Natural killer cell (primary cell): ENCODE measurements at regions of chr7 and their contacts with region 1.

Region 1: DNA sequence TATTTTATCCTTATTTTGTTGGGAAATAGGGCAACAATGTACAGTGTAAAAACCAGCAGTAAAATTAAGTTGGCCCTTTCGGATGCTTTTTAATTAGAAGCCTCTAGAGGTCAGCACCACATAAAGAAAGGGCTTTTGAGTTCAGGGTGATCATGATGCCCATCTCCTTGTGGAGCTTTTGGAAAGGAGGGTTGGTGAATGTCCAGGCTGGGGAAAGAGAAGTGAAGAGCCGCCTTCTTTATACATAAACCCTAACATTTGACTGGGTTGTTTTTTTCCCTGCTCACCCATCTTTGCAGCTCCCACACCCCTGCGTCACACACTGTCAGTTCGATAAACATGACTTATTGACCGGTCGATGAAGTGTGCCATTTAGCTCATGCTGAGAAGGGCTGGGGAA is 29.8 kb downstream of the MTURN start:
- DNase-seq: peak in 1 of 2 donors; percentile 51
- ATAC-seq: peak in 2 of 3 donors; percentile 14 to 25
- H3K4me3 ChIP-seq: no peak overlapping the region
- H3K4me3 Mint-ChIP-seq: peak overlapping the region; percentile 74
- H3K27ac ChIP-seq: no peak overlapping the region
- H3K27ac Mint-ChIP-seq: peak overlapping the region; percentile 87 to 89
- H3K4me1 ChIP-seq: peaks cover 32% of the 10 kb centered on the region
- H3K4me1 Mint-ChIP-seq: peaks cover 40 to 48% of the 10 kb centered on the region in 2 donors
- H3K27me3 ChIP-seq: no peaks in the 10 kb centered on the region
- H3K27me3 Mint-ChIP-seq: no peaks in the 10 kb centered on the region
- CTCF ChIP-seq: peak; percentile 67

Region 2: GRCh38 chr7:30026229-30027064 is 138.1 kb before region 1 on chr7 and contains the start of gene FKBP14:
- intact Hi-C with region 1: loop called (anchors 1 kb)
- DNase-seq: peak; percentile 88 to 96
- ATAC-seq: peak; percentile 83 to 93 (median 87)
- H3K4me3 ChIP-seq: peak within 1 kb of the TSS; percentile 88
- H3K4me3 Mint-ChIP-seq: no peak within 1 kb of the TSS
- H3K27ac ChIP-seq: peak within 1 kb of the TSS; percentile 76
- H3K27ac Mint-ChIP-seq: peak within 1 kb of the TSS; percentile 85 to 92
- H3K4me1 ChIP-seq: peaks cover 15% of the 10 kb centered on the region
- H3K4me1 Mint-ChIP-seq: peaks cover 35 to 45% of the 10 kb centered on the region in 2 donors
- H3K27me3 ChIP-seq: no peaks in the 10 kb centered on the region
- H3K27me3 Mint-ChIP-seq: no peaks in the 10 kb centered on the region
- CTCF ChIP-seq: no peak
- total RNA-seq, gene FKBP14: 11.1 to 13.4 (median 11.9) TPM

Region 3: GRCh38 chr7:30116771-30117170 is 47.8 kb before region 1 on chr7:
- intact Hi-C with region 1: no loop called
- DNase-seq: no peak
- ATAC-seq: no peak
- H3K4me3 ChIP-seq: no peak overlapping the region
- H3K4me3 Mint-ChIP-seq: no peak overlapping the region
- H3K27ac ChIP-seq: no peak overlapping the region
- H3K27ac Mint-ChIP-seq: no peak overlapping the region
- H3K4me1 ChIP-seq: no peaks in the 10 kb centered on the region
- H3K4me1 Mint-ChIP-seq: peaks cover 6% of the 10 kb centered on the region in 2 donors
- H3K27me3 ChIP-seq: no peaks in the 10 kb centered on the region
- H3K27me3 Mint-ChIP-seq: no peaks in the 10 kb centered on the region
- CTCF ChIP-seq: no peak

Region 4: GRCh38 chr7:30284298-30285066 is 119.9 kb after region 1 on chr7 and contains the start of gene ZNRF2:
- intact Hi-C with region 1: loop called (anchors 1 kb)
- DNase-seq: peak; percentile 96 to 100
- ATAC-seq: peak; percentile 81 to 94 (median 83)
- H3K4me3 ChIP-seq: peak within 1 kb of the TSS; percentile 65
- H3K4me3 Mint-ChIP-seq: peak within 1 kb of the TSS; percentile 84
- H3K27ac ChIP-seq: peak within 1 kb of the TSS; percentile 90
- H3K27ac Mint-ChIP-seq: peak within 1 kb of the TSS; percentile 89 to 98
- H3K4me1 ChIP-seq: peaks cover 8% of the 10 kb centered on the region
- H3K4me1 Mint-ChIP-seq: peaks cover 52 to 53% of the 10 kb centered on the region in 2 donors
- H3K27me3 ChIP-seq: no peaks in the 10 kb centered on the region
- H3K27me3 Mint-ChIP-seq: no peaks in the 10 kb centered on the region
- CTCF ChIP-seq: peak; percentile 25
- total RNA-seq, gene ZNRF2: 35.0 to 43.7 (median 36.3) TPM

Region 5: DNA sequence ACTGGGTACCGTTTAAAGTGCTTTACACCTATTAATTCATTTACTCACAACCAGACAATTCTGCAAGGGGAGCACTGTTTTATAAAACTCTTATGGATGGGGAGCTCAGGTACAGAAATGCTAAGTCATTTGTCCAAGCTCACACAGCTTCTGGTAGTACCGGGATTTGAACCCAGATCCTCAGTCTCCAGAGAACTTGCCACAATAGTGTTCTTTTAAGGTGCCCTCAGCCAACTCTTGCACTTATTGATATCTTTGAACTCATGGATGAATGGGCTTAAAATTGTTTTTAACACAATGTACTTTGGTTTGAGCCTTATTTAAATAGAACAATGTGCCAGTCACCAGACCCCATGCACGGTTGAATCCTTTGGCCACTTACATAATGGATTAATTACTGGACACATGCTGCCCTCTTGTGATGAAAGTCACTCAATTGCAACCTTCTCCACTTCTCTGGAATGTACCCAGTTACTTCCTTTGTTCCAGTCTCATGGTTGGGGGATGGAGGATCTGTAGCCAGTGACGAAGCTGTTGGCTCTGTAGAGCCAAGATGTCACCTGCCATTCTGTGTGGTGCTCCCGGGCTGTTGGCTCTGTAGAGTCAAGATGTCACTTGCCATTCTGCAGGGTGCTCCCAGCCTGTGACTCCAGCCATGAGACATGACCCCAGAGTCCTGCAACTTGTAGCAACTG is 248.4 kb after region 1 on chr7:
- intact Hi-C with region 1: loop called (anchors 2 kb)
- DNase-seq: peak in 1 of 2 donors; percentile 63
- ATAC-seq: peak in 2 of 3 donors; percentile 69 to 76
- H3K4me3 ChIP-seq: no peak overlapping the region
- H3K4me3 Mint-ChIP-seq: no peak overlapping the region
- H3K27ac ChIP-seq: no peak overlapping the region
- H3K27ac Mint-ChIP-seq: no peak overlapping the region
- H3K4me1 ChIP-seq: no peaks in the 10 kb centered on the region
- H3K4me1 Mint-ChIP-seq: no peaks in the 10 kb centered on the region
- H3K27me3 ChIP-seq: no peaks in the 10 kb centered on the region
- H3K27me3 Mint-ChIP-seq: no peaks in the 10 kb centered on the region
- CTCF ChIP-seq: peak; percentile 38

Region 6: DNA sequence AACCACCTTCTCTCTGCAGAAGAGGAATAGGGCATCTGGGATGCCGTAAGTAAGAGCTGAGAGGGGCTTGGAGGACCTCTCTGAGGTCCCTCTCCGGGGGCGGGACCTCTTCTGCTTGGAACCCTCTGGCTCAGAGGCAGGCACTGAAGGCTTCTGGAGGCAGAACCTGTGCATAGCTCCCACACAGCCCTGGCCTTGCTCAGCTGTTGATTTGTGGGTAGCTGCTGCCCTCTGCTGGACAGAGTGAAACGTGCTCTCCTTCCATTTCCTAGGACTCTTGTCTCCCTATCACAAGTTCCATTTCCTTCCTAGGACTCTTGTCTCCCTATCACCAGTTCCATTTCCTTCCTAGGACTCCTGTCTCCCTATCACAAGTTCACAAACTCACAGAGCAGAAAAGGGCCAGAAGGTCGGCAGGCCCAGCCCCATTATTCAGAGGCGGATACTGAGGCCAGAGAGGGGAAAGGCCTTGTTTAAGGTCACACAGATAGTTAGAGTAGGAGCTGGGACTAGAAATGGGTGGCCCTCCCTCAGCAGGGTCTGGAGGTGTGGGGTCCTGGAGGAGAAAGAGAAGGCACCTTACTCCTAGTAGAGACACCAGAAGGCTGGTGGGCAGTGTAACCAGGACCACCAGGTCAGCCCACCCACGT is 399.8 kb after region 1 on chr7:
- intact Hi-C with region 1: loop called (anchors 5 kb)
- DNase-seq: peak; percentile 70 to 88
- ATAC-seq: peak; percentile 88 to 99 (median 97)
- H3K4me3 ChIP-seq: no peak overlapping the region
- H3K4me3 Mint-ChIP-seq: no peak overlapping the region
- H3K27ac ChIP-seq: no peak overlapping the region
- H3K27ac Mint-ChIP-seq: peak overlapping the region in 1 of 2 donors; percentile 68
- H3K4me1 ChIP-seq: no peaks in the 10 kb centered on the region
- H3K4me1 Mint-ChIP-seq: peaks cover 0 to 7% of the 10 kb centered on the region in 2 donors
- H3K27me3 ChIP-seq: no peaks in the 10 kb centered on the region
- H3K27me3 Mint-ChIP-seq: no peaks in the 10 kb centered on the region
- CTCF ChIP-seq: peak; percentile 88